Calu3 (cell line): ENCODE measurements at regions of chr12 and their contacts with region 1.

Region 1: DNA sequence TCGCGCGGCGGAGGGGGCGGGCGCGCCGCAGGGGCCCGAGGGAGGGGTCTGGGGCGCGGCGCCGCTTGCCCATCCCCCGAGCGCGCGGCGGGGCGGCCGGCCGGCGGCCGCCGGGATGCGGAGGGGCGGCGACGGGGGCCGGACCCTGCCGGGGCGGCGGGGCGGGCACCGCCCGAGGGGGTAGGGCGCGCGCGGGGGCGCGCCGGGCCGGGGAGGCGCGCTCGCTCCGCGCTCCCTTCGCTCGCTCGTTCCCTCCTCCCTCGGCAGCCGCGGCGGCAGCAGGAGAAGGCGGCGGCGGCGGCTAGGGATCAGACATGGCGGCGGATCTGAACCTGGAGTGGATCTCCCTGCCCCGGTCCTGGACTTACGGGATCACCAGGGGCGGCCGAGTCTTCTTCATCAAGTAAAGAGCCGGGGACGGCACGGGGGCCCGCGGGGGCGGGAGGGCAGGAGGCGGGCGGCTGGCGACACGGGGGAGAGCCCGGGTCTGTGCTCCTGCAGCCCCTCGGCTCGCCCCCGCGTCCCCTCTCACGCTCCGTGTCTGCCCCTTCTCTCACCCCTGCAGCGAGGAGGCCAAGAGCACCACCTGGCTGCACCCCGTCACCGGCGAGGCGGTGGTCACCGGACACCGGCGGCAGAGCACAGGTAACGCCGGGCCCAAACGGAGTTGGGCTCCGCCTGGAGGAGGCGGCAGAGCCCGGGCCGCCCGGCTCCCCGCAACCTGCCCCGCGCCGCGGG is at the start of gene PLEKHA5:
- DNase-seq: peak; percentile 79
- H3K4me3 Mint-ChIP-seq: peak within 1 kb of the TSS; percentile 98
- H3K27ac Mint-ChIP-seq: peak within 1 kb of the TSS; percentile 85
- H3K4me1 Mint-ChIP-seq: peaks cover 23% of the 10 kb centered on the region
- H3K27me3 Mint-ChIP-seq: no peaks in the 10 kb centered on the region
- CTCF ChIP-seq: no peak
- total RNA-seq, gene PLEKHA5: 49.2 and 57.9 TPM in 2 replicates

Region 2: GRCh38 chr12:18250313-18250916 is 879.2 kb before region 1 on chr12:
- CTCF ChIA-PET with region 1: no interaction called
- intact Hi-C with region 1: loop called (anchors 10 kb)
- DNase-seq: peak; percentile 56
- H3K4me3 Mint-ChIP-seq: no peak overlapping the region
- H3K27ac Mint-ChIP-seq: no peak overlapping the region
- H3K4me1 Mint-ChIP-seq: peaks cover 24% of the 10 kb centered on the region
- H3K27me3 Mint-ChIP-seq: no peaks in the 10 kb centered on the region
- CTCF ChIP-seq: peak; percentile 48

Region 3: GRCh38 chr12:18723756-18724155 is 405.9 kb before region 1 on chr12:
- CTCF ChIA-PET with region 1: no interaction called
- intact Hi-C with region 1: no loop called
- DNase-seq: peak; percentile 31
- H3K4me3 Mint-ChIP-seq: peak overlapping the region; percentile 42
- H3K27ac Mint-ChIP-seq: peak overlapping the region; percentile 67
- H3K4me1 Mint-ChIP-seq: peaks cover 48% of the 10 kb centered on the region
- H3K27me3 Mint-ChIP-seq: no peaks in the 10 kb centered on the region
- CTCF ChIP-seq: no peak

Region 4: DNA sequence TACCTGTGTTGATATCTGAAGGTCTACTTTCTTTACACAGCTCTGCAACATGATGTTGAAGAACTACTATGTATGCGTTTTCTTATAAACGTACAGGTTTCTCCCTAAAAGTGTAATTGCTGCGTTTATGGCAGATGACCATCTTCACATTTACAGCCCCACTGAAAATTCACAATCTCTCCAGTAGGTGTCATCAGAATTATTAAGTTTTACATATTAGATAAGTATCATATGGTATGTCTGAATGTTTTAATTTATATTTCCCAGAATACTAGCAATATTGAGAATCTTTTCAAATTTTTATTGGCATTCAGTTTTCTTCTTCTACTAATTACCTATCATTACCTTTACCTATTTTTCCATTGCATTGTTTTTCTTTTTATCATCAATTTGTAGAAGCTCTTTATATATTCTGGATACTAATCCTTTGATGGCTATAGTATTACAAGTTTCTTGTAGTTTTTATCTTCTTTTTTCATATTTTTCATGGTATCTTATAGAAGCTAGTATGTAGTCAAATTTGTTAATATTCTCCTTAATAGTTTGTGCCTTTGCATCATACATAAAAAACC is 268.3 kb before region 1 on chr12:
- CTCF ChIA-PET with region 1: no interaction called
- intact Hi-C with region 1: loop called (anchors 2 kb)
- DNase-seq: peak; percentile 10
- H3K4me3 Mint-ChIP-seq: no peak overlapping the region
- H3K27ac Mint-ChIP-seq: peak overlapping the region; percentile 11
- H3K4me1 Mint-ChIP-seq: peaks cover 21% of the 10 kb centered on the region
- H3K27me3 Mint-ChIP-seq: no peaks in the 10 kb centered on the region
- CTCF ChIP-seq: peak; percentile 50

Region 5: GRCh38 chr12:19018302-19018970 is 111.2 kb before region 1 on chr12:
- CTCF ChIA-PET with region 1: no interaction called
- intact Hi-C with region 1: loop called (anchors 5 kb)
- DNase-seq: peak; percentile 12
- H3K4me3 Mint-ChIP-seq: no peak overlapping the region
- H3K27ac Mint-ChIP-seq: peak overlapping the region; percentile 74
- H3K4me1 Mint-ChIP-seq: peaks cover 41% of the 10 kb centered on the region
- H3K27me3 Mint-ChIP-seq: no peaks in the 10 kb centered on the region
- CTCF ChIP-seq: no peak

Region 6: DNA sequence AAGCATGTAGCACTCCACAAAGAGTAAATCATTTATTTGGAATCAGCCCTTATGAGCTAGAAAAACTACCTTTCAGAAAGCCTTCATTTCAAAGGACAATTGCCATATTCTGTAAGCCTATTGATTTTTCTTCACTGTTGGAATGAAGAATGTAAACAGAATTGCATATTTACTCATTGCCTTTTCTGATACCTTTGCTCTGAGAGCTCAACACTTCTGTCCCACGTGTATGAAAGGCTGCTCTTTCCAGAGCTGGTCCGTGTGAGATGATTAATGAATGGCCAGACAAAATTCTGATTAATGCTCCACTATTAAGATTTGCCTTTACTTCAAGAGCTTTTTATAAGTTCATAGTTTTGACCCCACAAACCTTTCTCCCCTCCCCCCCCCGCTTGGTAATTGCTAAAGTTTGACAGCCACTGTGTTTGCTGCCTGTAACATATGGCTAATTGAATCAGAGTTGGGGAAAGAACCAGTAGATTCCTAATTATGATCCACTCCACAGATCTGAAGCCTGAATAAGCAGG is 63.1 kb before region 1 on chr12:
- CTCF ChIA-PET with region 1: no interaction called
- intact Hi-C with region 1: loop called (anchors 2 kb)
- DNase-seq: peak; percentile 48
- H3K4me3 Mint-ChIP-seq: peak overlapping the region; percentile 60
- H3K27ac Mint-ChIP-seq: peak overlapping the region; percentile 93
- H3K4me1 Mint-ChIP-seq: peaks cover 36% of the 10 kb centered on the region
- H3K27me3 Mint-ChIP-seq: no peaks in the 10 kb centered on the region
- CTCF ChIP-seq: no peak

Region 7: GRCh38 chr12:19095756-19096480 is 33.7 kb before region 1 on chr12:
- CTCF ChIA-PET with region 1: no interaction called
- intact Hi-C with region 1: loop called (anchors 2 kb)
- DNase-seq: peak; percentile 6
- H3K4me3 Mint-ChIP-seq: no peak overlapping the region
- H3K27ac Mint-ChIP-seq: peak overlapping the region; percentile 55
- H3K4me1 Mint-ChIP-seq: peaks cover 17% of the 10 kb centered on the region
- H3K27me3 Mint-ChIP-seq: no peaks in the 10 kb centered on the region
- CTCF ChIP-seq: no peak

Region 8: DNA sequence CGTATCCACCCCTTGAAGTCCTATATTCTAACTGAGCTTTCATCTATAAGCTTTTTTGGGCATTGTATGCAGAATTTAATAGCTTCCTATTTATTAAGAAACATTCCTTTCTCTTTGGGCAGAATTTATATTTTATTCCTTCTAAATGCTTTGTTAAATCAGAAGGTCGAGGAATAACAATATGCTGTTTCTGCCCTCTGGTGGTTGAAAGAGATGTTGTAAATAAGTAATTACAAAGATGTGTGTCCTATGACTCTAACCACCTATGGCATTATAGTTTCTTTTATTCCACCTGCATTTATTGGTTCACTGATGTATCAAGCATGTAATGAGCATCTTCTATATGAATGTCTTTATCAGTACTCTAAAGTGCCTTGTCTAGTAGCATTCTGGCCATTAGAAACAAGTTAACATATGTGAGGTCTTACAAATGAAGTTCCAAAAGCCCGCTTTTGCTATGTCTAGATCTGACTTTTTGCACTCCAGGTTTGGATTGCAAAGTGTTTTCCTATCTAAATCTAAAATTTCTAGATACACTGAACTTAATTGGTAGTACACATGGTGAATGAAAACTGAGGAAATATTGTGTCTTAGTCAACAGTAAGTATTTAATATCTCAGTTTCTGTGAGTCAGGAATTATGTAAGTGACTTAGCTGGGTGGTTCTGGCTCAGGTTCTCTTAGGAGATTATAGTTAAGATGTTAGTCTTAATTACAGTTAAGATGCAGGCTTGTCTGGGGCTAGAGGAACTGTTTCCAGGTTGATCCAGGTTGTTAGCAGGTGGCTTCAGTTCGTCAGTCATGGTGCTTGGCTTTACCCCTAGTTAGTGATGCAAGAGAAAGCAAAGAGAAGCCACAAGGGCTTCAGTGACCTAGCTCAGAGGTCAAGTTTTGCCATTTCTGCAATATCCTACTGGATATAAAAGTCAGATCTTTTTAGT is 57.3 kb after region 1 on chr12:
- CTCF ChIA-PET with region 1: no interaction called
- intact Hi-C with region 1: loop called (anchors 5 kb)
- DNase-seq: peak; percentile 17
- H3K4me3 Mint-ChIP-seq: no peak overlapping the region
- H3K27ac Mint-ChIP-seq: peak overlapping the region; percentile 36
- H3K4me1 Mint-ChIP-seq: peaks cover 64% of the 10 kb centered on the region
- H3K27me3 Mint-ChIP-seq: no peaks in the 10 kb centered on the region
- CTCF ChIP-seq: peak; percentile 45